Activated CD4-positive, alpha-beta T cell treated with anti-CD3 and anti-CD28 coated beads, Interleukin-2, amount 10 ng/mL, durations not matched to agents 7 days and 5 days (primary cell): ENCODE measurements at regions of chr19 and their contacts with region 1.

Region 1: DNA sequence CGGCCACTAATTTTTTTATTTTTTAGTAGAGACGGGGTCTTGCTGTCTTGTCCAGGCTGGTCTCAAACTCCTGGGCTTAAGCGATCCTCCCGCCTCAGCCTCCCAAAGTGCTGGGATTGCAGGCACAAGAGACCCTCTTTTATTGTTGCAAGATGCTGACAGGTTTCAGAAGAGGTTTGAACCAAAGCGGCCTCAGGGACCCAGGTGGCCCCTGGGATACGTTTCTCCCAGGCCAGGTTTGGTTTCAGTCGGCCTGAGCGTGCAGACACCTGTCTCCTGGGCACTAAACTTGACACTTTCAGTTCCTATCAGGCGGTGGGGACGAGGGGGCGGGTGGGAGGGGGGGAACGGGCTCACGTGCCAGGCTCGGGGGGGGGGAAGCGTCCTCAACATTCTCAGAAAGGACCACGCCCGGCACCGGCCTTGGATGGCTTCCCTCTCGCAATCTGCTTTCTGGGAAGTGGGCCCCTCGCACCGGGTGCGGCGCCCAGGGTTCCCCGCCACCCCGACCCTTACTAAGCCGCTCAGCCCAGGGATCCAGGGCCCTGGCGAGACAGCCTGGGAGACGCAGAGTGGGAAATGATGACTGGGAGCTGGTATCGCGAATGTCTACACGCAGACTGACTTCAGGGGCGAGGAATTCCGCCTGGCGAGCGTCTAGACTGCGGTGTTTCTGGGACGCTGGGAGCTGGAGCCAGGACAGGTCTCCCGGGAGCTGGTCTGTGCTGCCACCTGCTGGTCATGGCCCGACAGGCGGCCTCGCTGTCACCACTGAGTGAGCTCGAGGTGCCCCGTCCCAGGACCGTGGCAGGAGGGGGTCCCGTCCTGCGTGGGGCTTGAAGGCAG is 91.6 kb downstream of the GNG7 start:
- DNase-seq: peak; percentile 90
- H3K4me3 Mint-ChIP-seq: peak overlapping the region; percentile 71
- H3K27ac Mint-ChIP-seq: peak overlapping the region; percentile 34
- H3K4me1 Mint-ChIP-seq: peaks cover 51% of the 10 kb centered on the region
- H3K27me3 Mint-ChIP-seq: peaks cover 13% of the 10 kb centered on the region

Region 2: DNA sequence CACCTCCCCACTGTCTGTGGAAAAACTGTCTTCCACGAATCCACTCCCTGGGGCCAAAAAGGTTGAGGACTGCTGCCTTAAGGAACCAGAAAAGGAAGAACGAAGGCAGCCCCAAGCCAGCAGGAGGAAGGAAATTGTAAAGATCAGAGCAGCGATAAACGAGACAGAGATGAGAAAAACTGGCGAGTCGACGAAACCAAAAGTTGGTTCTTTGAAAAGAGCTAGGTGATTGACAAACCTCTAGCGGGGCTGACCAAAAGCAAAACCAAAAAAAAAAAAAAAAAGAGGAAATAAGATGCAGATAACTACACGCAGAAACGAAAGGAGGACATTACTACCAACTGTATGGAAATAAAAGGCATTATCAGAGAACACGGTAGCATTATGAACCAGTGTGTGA is 58.0 kb before region 1 on chr19:
- CTCF ChIA-PET with region 1: interaction called, 10 read pairs
- POLR2A ChIA-PET with region 1: no interaction called
- DNase-seq: peak; percentile 85
- H3K4me3 Mint-ChIP-seq: peak overlapping the region; percentile 63
- H3K27ac Mint-ChIP-seq: peak overlapping the region; percentile 86
- H3K4me1 Mint-ChIP-seq: peaks cover 33% of the 10 kb centered on the region
- H3K27me3 Mint-ChIP-seq: no peaks in the 10 kb centered on the region

Region 3: DNA sequence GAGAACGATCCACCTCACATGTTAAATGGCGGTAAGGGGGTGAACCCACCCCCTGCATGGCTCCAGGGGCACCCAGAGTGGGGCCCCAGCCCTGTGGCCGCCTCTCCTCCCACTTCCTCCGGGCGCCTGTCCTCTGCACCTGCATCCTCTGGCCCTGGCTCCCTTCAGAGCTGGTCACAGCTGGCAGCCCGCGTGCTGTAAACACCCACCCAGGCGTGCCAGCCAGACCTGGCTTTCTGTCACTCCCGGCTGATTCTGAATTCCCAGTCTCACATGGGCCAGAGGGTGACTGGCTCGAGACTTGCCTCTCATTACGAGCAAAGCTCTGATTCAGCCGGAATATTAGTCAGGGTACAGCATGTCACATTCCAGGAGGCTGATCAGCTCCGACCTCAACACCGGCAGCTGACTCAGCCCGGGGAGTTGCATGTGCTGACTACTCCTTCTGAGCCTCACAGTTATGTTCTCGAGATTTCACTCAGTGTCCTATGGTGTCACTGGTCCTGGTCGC is 16.5 kb after region 1 on chr19:
- CTCF ChIA-PET with region 1: interaction called, 18 read pairs
- POLR2A ChIA-PET with region 1: no interaction called
- DNase-seq: no peak
- H3K4me3 Mint-ChIP-seq: no peak overlapping the region
- H3K27ac Mint-ChIP-seq: no peak overlapping the region
- H3K4me1 Mint-ChIP-seq: peaks cover 48% of the 10 kb centered on the region
- H3K27me3 Mint-ChIP-seq: no peaks in the 10 kb centered on the region

Region 4: DNA sequence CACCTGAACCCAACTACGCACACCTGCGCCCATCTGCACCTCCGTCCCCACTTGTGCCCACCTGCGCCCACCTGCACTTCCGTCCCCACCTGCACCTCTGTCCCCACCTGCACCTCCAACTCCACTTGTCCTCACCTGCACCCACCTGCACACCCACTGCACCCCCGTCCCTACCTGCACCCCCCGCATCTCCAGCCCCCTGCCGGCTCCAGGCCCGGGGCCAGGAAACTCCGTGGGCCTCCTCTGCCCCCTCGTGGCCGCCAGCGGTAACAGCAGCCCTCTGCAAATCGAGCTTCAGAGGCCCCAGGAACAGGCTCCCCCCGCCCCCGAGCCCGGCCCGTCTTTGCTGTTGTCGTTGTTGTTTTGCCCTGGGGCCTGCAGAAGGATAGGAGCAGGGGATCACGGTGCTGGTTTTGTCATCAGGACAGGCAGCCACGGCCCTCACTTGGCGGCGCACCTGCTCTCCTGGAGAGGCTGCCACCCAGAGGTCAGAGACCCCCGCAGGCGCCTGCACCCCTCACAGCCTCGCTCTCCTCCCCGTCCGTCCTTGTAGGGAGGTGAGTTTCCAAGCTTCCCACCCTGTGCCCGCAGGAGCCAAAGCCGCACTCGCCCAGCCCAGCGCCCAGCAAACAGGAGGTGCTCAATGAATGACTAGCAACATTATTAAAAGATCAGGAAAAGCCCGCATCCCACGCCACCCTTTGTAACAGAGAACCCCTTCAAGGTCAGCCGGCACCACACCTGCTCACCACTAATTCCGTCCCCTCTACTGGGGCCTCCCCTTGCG is 26.2 kb after region 1 on chr19:
- CTCF ChIA-PET with region 1: interaction called, 15 read pairs
- POLR2A ChIA-PET with region 1: no interaction called
- DNase-seq: peak; percentile 78
- H3K4me3 Mint-ChIP-seq: peak overlapping the region; percentile 36
- H3K27ac Mint-ChIP-seq: no peak overlapping the region
- H3K4me1 Mint-ChIP-seq: peaks cover 19% of the 10 kb centered on the region
- H3K27me3 Mint-ChIP-seq: peaks cover 6% of the 10 kb centered on the region